GM12878 (cell line): ENCODE measurements at regions of chr13 and their contacts with region 1.

Region 1: GRCh38 chr13:33069365-33069764 is 53.1 kb downstream of the KL start:
- DNase-seq: no peak
- ATAC-seq: peak; percentile 67
- H3K4me3 ChIP-seq: no peak overlapping the region
- H3K27ac ChIP-seq: no peak overlapping the region
- H3K4me1 ChIP-seq: no peaks in the 10 kb centered on the region
- H3K27me3 ChIP-seq: no peaks in the 10 kb centered on the region
- CTCF ChIP-seq: peak; percentile 10 to 37 (median 18); a peak in 3 of 6 replicates
- EP300 ChIP-seq: no peak
- POLR2A ChIP-seq: no peak
- RAD21 ChIP-seq: peak; percentile 58

Region 2: DNA sequence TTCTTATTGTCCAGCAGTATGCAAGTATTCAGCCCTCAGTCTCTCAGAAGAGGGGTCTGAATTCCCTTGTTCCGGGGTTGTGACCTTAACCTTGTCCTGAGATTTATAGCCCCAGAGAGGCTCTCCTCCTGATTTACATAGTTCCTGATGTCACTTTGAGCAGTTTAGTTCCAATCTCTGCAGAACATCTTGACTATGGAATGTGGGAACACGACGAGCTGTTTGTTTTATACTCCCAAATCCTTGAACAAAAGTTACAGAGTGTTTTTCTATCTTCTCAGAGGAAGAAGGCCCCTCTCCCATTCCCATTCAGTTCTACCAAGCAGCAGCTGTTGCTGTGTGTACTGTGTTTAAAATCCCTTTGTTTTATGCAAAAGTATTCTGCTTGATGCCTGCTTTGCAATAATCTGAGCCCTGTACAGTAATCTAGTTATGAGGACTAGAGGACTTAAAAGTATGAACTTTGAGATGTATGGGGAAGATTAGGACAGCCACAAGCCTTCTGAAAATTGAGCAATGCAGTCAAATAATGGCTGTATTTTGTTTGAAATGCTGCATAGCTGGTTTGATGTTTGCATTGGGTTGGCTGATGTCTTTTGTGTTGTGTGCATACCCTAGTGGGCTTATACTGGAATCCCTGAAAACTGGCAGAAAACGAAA is 21.5 kb after region 1 on chr13:
- CTCF ChIA-PET with region 1: no interaction called
- POLR2A ChIA-PET with region 1: no interaction called
- RAD21 ChIA-PET with region 1: no interaction called
- SMC1A ChIA-PET with region 1: no interaction called
- in situ Hi-C with region 1: no loop called
- intact Hi-C with region 1: no loop called
- DNase-seq: no peak
- ATAC-seq: no peak
- H3K4me3 ChIP-seq: no peak overlapping the region
- H3K27ac ChIP-seq: no peak overlapping the region
- H3K4me1 ChIP-seq: no peaks in the 10 kb centered on the region
- H3K27me3 ChIP-seq: no peaks in the 10 kb centered on the region
- CTCF ChIP-seq: no peak
- EP300 ChIP-seq: no peak
- POLR2A ChIP-seq: no peak
- RAD21 ChIP-seq: no peak

Region 3: GRCh38 chr13:33537026-33537425 is 467.7 kb after region 1 on chr13:
- CTCF ChIA-PET with region 1: no interaction called
- POLR2A ChIA-PET with region 1: no interaction called
- RAD21 ChIA-PET with region 1: no interaction called
- SMC1A ChIA-PET with region 1: no interaction called
- in situ Hi-C with region 1: no loop called
- intact Hi-C with region 1: loop called (anchors 10 kb)
- DNase-seq: no peak
- ATAC-seq: peak; percentile 38
- H3K4me3 ChIP-seq: no peak overlapping the region
- H3K27ac ChIP-seq: peak overlapping the region; percentile 72
- H3K4me1 ChIP-seq: peaks cover 6% of the 10 kb centered on the region
- H3K27me3 ChIP-seq: no peaks in the 10 kb centered on the region
- CTCF ChIP-seq: no peak
- EP300 ChIP-seq: no peak
- POLR2A ChIP-seq: no peak
- RAD21 ChIP-seq: no peak

Region 4: GRCh38 chr13:33571618-33572017 is 502.3 kb after region 1 on chr13:
- CTCF ChIA-PET with region 1: no interaction called
- POLR2A ChIA-PET with region 1: no interaction called
- RAD21 ChIA-PET with region 1: no interaction called
- SMC1A ChIA-PET with region 1: no interaction called
- in situ Hi-C with region 1: no loop called
- intact Hi-C with region 1: no loop called
- DNase-seq: no peak
- ATAC-seq: peak; percentile 71
- H3K4me3 ChIP-seq: no peak overlapping the region
- H3K27ac ChIP-seq: no peak overlapping the region
- H3K4me1 ChIP-seq: peaks cover 7% of the 10 kb centered on the region; the same call in 1 of the 2 replicates
- H3K27me3 ChIP-seq: no peaks in the 10 kb centered on the region
- CTCF ChIP-seq: no peak
- EP300 ChIP-seq: no peak
- POLR2A ChIP-seq: no peak
- RAD21 ChIP-seq: no peak

Region 5: GRCh38 chr13:34357435-34358232 is 1288.3 kb after region 1 on chr13:
- CTCF ChIA-PET with region 1: no interaction called
- POLR2A ChIA-PET with region 1: no interaction called
- RAD21 ChIA-PET with region 1: no interaction called
- SMC1A ChIA-PET with region 1: no interaction called
- in situ Hi-C with region 1: no loop called
- intact Hi-C with region 1: no loop called
- DNase-seq: no peak
- ATAC-seq: no peak
- H3K4me3 ChIP-seq: no peak overlapping the region
- H3K27ac ChIP-seq: no peak overlapping the region
- H3K4me1 ChIP-seq: no peaks in the 10 kb centered on the region
- H3K27me3 ChIP-seq: no peaks in the 10 kb centered on the region
- CTCF ChIP-seq: no peak
- EP300 ChIP-seq: no peak
- POLR2A ChIP-seq: no peak
- RAD21 ChIP-seq: no peak